ENCODE measurements at regions of chr1 and their contacts with region 1.

Region 1: GRCh38 chr1:64917328-64917861 is 49.0 kb downstream of the JAK1 start:
- DNase-seq: peak; percentile 57 to 76
- ATAC-seq: peak; percentile 84 to 86
- H3K4me3 ChIP-seq: no peak overlapping the region
- H3K27ac ChIP-seq: peak overlapping the region; percentile 42 to 66 (median 61)
- H3K4me1 ChIP-seq: peaks cover 62 to 84% of the 10 kb centered on the region in 2 donors
- H3K27me3 ChIP-seq: no peaks in the 10 kb centered on the region
- CTCF ChIP-seq: no peak
- POLR2A ChIP-seq: no peak

Region 2: GRCh38 chr1:64864018-64864940 is 53.1 kb before region 1 on chr1:
- in situ Hi-C with region 1: no loop called
- intact Hi-C with region 1: no loop called
- DNase-seq: peak; percentile 44 to 54
- ATAC-seq: peak; percentile 48 to 51
- H3K4me3 ChIP-seq: no peak overlapping the region
- H3K27ac ChIP-seq: peak overlapping the region; percentile 35 to 69 (median 52)
- H3K4me1 ChIP-seq: peaks cover 6 to 11% of the 10 kb centered on the region in 2 donors
- H3K27me3 ChIP-seq: no peaks in the 10 kb centered on the region
- CTCF ChIP-seq: no peak
- POLR2A ChIP-seq: peak in 1 of 2 donors; percentile 14

Region 3: GRCh38 chr1:64933296-64934070 is 16.1 kb after region 1 on chr1:
- in situ Hi-C with region 1: no loop called
- intact Hi-C with region 1: loop called (anchors 2 kb)
- DNase-seq: peak; percentile 48 to 66
- ATAC-seq: peak; percentile 59 to 60
- H3K4me3 ChIP-seq: peak overlapping the region; percentile 3 to 35 (median 14)
- H3K27ac ChIP-seq: peak overlapping the region; percentile 81 to 87 (median 82)
- H3K4me1 ChIP-seq: peaks cover 69 to 76% of the 10 kb centered on the region in 2 donors
- H3K27me3 ChIP-seq: no peaks in the 10 kb centered on the region
- CTCF ChIP-seq: no peak
- POLR2A ChIP-seq: no peak